PC-9 (cell line): ENCODE measurements at regions of chr10 and their contacts with region 1.

Region 1: DNA sequence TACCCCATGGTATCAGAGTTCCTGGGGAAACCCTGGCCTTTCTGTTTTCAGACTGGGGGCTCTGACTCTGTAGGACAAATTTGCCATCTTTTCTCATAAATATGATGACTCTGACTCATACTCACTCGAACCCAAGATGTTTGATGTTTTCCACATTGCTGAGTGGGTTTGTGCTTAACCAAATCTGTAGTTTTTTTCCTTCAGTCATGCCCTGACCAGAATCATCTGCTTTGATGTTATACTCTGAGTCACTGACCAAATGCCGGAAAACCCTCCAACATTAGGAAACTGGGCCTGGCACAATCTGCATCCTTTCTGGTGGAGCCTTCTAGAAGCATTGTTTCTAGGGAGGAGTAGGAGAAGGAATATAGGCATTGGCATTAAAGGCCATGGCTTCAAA is 118.7 kb downstream of the C10orf105 start:
- DNase-seq: no peak
- H3K4me3 ChIP-seq: no peak overlapping the region
- H3K27ac ChIP-seq: no peak overlapping the region
- H3K4me1 ChIP-seq: peaks cover 17% of the 10 kb centered on the region
- H3K27me3 ChIP-seq: no peaks in the 10 kb centered on the region
- CTCF ChIP-seq: no peak

Region 2: GRCh38 chr10:70903262-70903921 is 697.5 kb before region 1 on chr10:
- CTCF ChIA-PET with region 1: interaction called, 11 read pairs
- POLR2A ChIA-PET with region 1: no interaction called
- intact Hi-C with region 1: no loop called
- DNase-seq: peak in 1 of 2 experiments; percentile 55
- H3K4me3 ChIP-seq: no peak overlapping the region
- H3K27ac ChIP-seq: no peak overlapping the region
- H3K4me1 ChIP-seq: 0 out of 2 replicates have a peak, but pooled peaks cover 5% of the 10 kb centered on the region
- H3K27me3 ChIP-seq: peaks cover 28% of the 10 kb centered on the region; the same call in 1 of the 2 replicates
- CTCF ChIP-seq: peak; percentile 99

Region 3: GRCh38 chr10:71666639-71667386 is 66.0 kb after region 1 on chr10:
- CTCF ChIA-PET with region 1: no interaction called
- POLR2A ChIA-PET with region 1: no interaction called
- intact Hi-C with region 1: no loop called
- DNase-seq: no peak
- H3K4me3 ChIP-seq: no peak overlapping the region
- H3K27ac ChIP-seq: no peak overlapping the region
- H3K4me1 ChIP-seq: no peaks in the 10 kb centered on the region
- H3K27me3 ChIP-seq: no peaks in the 10 kb centered on the region
- CTCF ChIP-seq: no peak